IMR-90 (cell line): ENCODE measurements at regions of chr1 and their contacts with region 1.

Region 1: GRCh38 chr1:210292231-210292871 is 36.4 kb upstream of the HHAT start:
- DNase-seq: no peak
- ATAC-seq: peak; percentile 46
- H3K4me3 ChIP-seq: peak overlapping the region; percentile 6; the same call in 1 of the 2 replicates
- H3K27ac ChIP-seq: no peak overlapping the region
- H3K4me1 ChIP-seq: peaks cover 3% of the 10 kb centered on the region; the same call in 1 of the 2 replicates
- H3K27me3 ChIP-seq: peaks cover 37% of the 10 kb centered on the region
- CTCF ChIP-seq: no peak
- POLR2A ChIP-seq: no peak
- RAD21 ChIP-seq: no peak

Region 2: DNA sequence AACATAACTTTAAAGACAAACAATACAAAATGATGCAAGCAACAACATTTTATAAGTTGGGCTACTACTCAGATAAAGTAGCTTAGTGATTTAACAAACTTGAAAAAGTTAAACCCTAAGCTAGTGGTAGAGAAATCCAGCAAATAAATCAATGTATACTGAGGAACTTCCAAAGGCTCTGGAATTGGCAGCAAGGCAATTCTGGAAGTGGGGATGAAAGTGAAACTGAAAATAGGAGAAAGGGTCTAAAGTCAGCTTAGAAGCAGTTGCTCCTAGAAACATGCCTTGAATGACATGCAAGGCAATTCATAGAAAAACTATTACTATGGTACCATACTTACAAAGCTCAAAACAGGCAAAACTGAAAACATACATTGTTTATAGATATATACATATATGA is 798.8 kb before region 1 on chr1:
- CTCF ChIA-PET with region 1: no interaction called
- POLR2A ChIA-PET with region 1: no interaction called
- dilution Hi-C with region 1: no loop called
- in situ Hi-C with region 1: no loop called
- intact Hi-C with region 1: no loop called
- DNase-seq: no peak
- ATAC-seq: no peak
- H3K4me3 ChIP-seq: no peak overlapping the region
- H3K27ac ChIP-seq: no peak overlapping the region
- H3K4me1 ChIP-seq: no peaks in the 10 kb centered on the region
- H3K27me3 ChIP-seq: peaks cover 2% of the 10 kb centered on the region
- CTCF ChIP-seq: no peak
- POLR2A ChIP-seq: no peak
- RAD21 ChIP-seq: no peak

Region 3: DNA sequence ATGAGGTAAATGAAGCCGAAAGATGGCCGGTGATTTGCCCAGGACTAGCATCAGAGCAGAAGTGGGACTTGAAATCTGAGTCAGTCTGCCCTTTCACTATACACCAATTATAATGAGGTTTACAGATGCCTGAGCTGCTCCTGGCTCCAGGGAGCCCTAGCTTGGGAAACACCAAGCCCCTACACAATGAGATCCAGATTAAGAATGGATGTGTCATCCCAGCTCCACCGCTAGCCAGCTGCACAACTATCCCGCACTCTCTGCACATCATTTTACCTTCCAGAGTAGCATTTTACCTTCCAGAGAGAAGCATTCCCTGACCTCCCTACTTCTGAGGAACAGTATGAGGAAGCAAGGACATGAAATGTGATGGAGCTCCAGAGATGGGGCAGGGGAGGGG is 32.8 kb before region 1 on chr1:
- CTCF ChIA-PET with region 1: interaction called, 4 read pairs
- POLR2A ChIA-PET with region 1: interaction called, 10 read pairs
- dilution Hi-C with region 1: no loop called
- in situ Hi-C with region 1: no loop called
- intact Hi-C with region 1: no loop called
- DNase-seq: peak; percentile 30
- ATAC-seq: no peak
- H3K4me3 ChIP-seq: no peak overlapping the region
- H3K27ac ChIP-seq: no peak overlapping the region
- H3K4me1 ChIP-seq: peaks cover 2% of the 10 kb centered on the region; the same call in 1 of the 2 replicates
- H3K27me3 ChIP-seq: peaks cover 25% of the 10 kb centered on the region
- CTCF ChIP-seq: no peak
- POLR2A ChIP-seq: no peak
- RAD21 ChIP-seq: no peak

Region 4: GRCh38 chr1:210332719-210333398 is 40.5 kb after region 1 on chr1:
- CTCF ChIA-PET with region 1: no interaction called
- POLR2A ChIA-PET with region 1: no interaction called
- dilution Hi-C with region 1: no loop called
- in situ Hi-C with region 1: no loop called
- intact Hi-C with region 1: no loop called
- DNase-seq: no peak
- ATAC-seq: no peak
- H3K4me3 ChIP-seq: no peak overlapping the region
- H3K27ac ChIP-seq: no peak overlapping the region
- H3K4me1 ChIP-seq: peaks cover 2% of the 10 kb centered on the region; the same call in 1 of the 2 replicates
- H3K27me3 ChIP-seq: 0 out of 2 replicates have a peak, but pooled peaks cover 4% of the 10 kb centered on the region
- CTCF ChIP-seq: no peak
- POLR2A ChIP-seq: no peak
- RAD21 ChIP-seq: no peak